ENCODE measurements at regions of chr4 and their contacts with region 1.

Region 1: GRCh38 chr4:47926639-47927258 is 12.4 kb upstream of the NFXL1 start:
- DNase-seq: peak; percentile 49 to 78 (median 75)
- H3K4me3 ChIP-seq: peak overlapping the region in 4 of 7 experiments; percentile 13 to 43 (median 32)
- H3K27ac ChIP-seq: no peak overlapping the region
- H3K4me1 ChIP-seq: peaks cover 0 to 10% (median 2%) of the 10 kb centered on the region in 4 experiments
- H3K27me3 ChIP-seq: peaks cover 0 to 2% (median 0%) of the 10 kb centered on the region in 5 experiments

Region 2: GRCh38 chr4:47915378-47915777 is 11.4 kb before region 1 on chr4:
- CTCF ChIA-PET with region 1: interaction called, 13 read pairs
- POLR2A ChIA-PET with region 1: no interaction called
- DNase-seq: peak in 2 of 3 donors; percentile 5 to 6
- H3K4me3 ChIP-seq: peak overlapping the region in 3 of 7 experiments; percentile 16 to 98 (median 94)
- H3K27ac ChIP-seq: no peak overlapping the region
- H3K4me1 ChIP-seq: peaks cover 4 to 19% (median 12%) of the 10 kb centered on the region in 4 experiments
- H3K27me3 ChIP-seq: no peaks in the 10 kb centered on the region

Region 3: GRCh38 chr4:47945930-47946726 is 19.4 kb after region 1 on chr4:
- CTCF ChIA-PET with region 1: no interaction called
- POLR2A ChIA-PET with region 1: no interaction called
- DNase-seq: no peak
- H3K4me3 ChIP-seq: no peak overlapping the region
- H3K27ac ChIP-seq: no peak overlapping the region
- H3K4me1 ChIP-seq: no peaks in the 10 kb centered on the region
- H3K27me3 ChIP-seq: no peaks in the 10 kb centered on the region

Measured in common myeloid progenitor, CD34-positive (primary cell).